Mammary epithelial cell (primary cell): ENCODE measurements at regions of chr16 and their contacts with region 1.

Region 1: GRCh38 chr16:6926762-6927161 is 405.9 kb upstream of the RBFOX1 start:
- DNase-seq: no peak
- H3K4me3 ChIP-seq: no peak overlapping the region
- H3K27ac ChIP-seq: no peak overlapping the region
- H3K4me1 ChIP-seq: no peaks in the 10 kb centered on the region
- H3K27me3 ChIP-seq: no peaks in the 10 kb centered on the region
- CTCF ChIP-seq: no peak

Region 2: DNA sequence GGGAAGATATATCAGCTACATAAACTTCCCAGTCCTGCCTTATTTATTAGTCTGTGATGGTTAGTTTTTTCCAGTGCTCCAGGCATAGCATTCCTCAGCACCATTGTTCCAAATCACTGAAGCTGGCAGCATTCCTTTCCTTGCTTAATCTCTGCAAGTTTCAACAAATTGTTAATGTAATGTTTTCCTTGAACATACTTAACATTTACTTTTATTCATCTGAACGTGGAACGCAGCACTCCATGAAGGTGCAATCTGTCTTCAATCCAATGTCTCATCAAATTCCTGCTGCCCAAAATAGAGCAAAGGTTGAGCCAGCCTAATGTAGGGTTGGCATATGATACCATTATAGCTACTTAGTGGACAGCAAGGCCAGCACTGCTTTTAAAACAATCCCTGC is 35.3 kb before region 1 on chr16:
- CTCF ChIA-PET with region 1: no interaction called
- dilution Hi-C with region 1: loop called (anchors 5 kb)
- in situ Hi-C with region 1: no loop called
- intact Hi-C with region 1: no loop called
- DNase-seq: no peak
- H3K4me3 ChIP-seq: no peak overlapping the region
- H3K27ac ChIP-seq: no peak overlapping the region
- H3K4me1 ChIP-seq: no peaks in the 10 kb centered on the region
- H3K27me3 ChIP-seq: no peaks in the 10 kb centered on the region
- CTCF ChIP-seq: no peak

Region 3: DNA sequence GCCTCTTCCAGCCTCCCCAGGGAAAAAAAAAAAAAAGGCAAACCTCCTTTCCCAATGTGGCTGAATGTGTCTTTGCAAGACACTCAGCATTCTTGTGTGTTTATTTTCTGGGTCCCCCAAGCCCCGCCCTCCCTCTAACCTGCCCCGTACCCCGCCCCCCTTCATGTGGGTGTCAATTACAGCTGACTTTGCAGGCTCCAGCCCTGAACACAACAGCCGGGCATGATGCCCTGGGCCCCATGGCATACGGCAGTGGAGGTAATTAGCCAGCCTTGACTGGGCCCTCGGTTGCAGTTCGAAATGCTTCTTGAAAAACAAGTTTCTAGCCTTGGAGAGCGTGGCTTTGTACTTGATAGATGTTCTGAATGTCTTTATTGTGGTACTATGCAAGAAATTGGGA is 51.2 kb after region 1 on chr16:
- CTCF ChIA-PET with region 1: no interaction called
- dilution Hi-C with region 1: loop called (anchors 5 kb)
- in situ Hi-C with region 1: no loop called
- intact Hi-C with region 1: no loop called
- DNase-seq: no peak
- H3K4me3 ChIP-seq: no peak overlapping the region
- H3K27ac ChIP-seq: no peak overlapping the region
- H3K4me1 ChIP-seq: no peaks in the 10 kb centered on the region
- H3K27me3 ChIP-seq: no peaks in the 10 kb centered on the region
- CTCF ChIP-seq: no peak